ENCODE measurements at regions of chr1 and their contacts with region 1.

Region 1: GRCh38 chr1:30779294-30780071 is 21.9 kb upstream of the LAPTM5 start:
- DNase-seq: peak; percentile 38 to 87
- H3K4me3 ChIP-seq: no peak overlapping the region
- H3K27ac ChIP-seq: no peak overlapping the region
- H3K4me1 ChIP-seq: peaks cover 10% of the 10 kb centered on the region; the same call in 1 of the 2 replicates
- H3K27me3 ChIP-seq: no peaks in the 10 kb centered on the region
- CTCF ChIP-seq: peak; percentile 96

Region 2: GRCh38 chr1:28822788-28823187 is 1956.7 kb before region 1 on chr1:
- CTCF ChIA-PET with region 1: interaction called, 12 read pairs
- POLR2A ChIA-PET with region 1: no interaction called
- intact Hi-C with region 1: no loop called
- DNase-seq: no peak
- H3K4me3 ChIP-seq: no peak overlapping the region
- H3K27ac ChIP-seq: no peak overlapping the region
- H3K4me1 ChIP-seq: no peaks in the 10 kb centered on the region
- H3K27me3 ChIP-seq: no peaks in the 10 kb centered on the region
- CTCF ChIP-seq: no peak

Region 3: GRCh38 chr1:30727824-30728223 is 51.7 kb before region 1 on chr1:
- CTCF ChIA-PET with region 1: interaction called, 13 read pairs
- POLR2A ChIA-PET with region 1: no interaction called
- intact Hi-C with region 1: no loop called
- DNase-seq: no peak
- H3K4me3 ChIP-seq: no peak overlapping the region
- H3K27ac ChIP-seq: no peak overlapping the region
- H3K4me1 ChIP-seq: 0 out of 2 replicates have a peak, but pooled peaks cover 6% of the 10 kb centered on the region
- H3K27me3 ChIP-seq: no peaks in the 10 kb centered on the region
- CTCF ChIP-seq: no peak

Region 4: GRCh38 chr1:30929135-30929889 is 149.8 kb after region 1 on chr1:
- CTCF ChIA-PET with region 1: interaction called, 10 read pairs
- POLR2A ChIA-PET with region 1: interaction called, 3 read pairs
- intact Hi-C with region 1: loop called (anchors 5 kb)
- DNase-seq: peak in 1 of 2 experiments; percentile 37
- H3K4me3 ChIP-seq: no peak overlapping the region
- H3K27ac ChIP-seq: no peak overlapping the region
- H3K4me1 ChIP-seq: no peaks in the 10 kb centered on the region
- H3K27me3 ChIP-seq: no peaks in the 10 kb centered on the region
- CTCF ChIP-seq: peak; percentile 82

Region 5: DNA sequence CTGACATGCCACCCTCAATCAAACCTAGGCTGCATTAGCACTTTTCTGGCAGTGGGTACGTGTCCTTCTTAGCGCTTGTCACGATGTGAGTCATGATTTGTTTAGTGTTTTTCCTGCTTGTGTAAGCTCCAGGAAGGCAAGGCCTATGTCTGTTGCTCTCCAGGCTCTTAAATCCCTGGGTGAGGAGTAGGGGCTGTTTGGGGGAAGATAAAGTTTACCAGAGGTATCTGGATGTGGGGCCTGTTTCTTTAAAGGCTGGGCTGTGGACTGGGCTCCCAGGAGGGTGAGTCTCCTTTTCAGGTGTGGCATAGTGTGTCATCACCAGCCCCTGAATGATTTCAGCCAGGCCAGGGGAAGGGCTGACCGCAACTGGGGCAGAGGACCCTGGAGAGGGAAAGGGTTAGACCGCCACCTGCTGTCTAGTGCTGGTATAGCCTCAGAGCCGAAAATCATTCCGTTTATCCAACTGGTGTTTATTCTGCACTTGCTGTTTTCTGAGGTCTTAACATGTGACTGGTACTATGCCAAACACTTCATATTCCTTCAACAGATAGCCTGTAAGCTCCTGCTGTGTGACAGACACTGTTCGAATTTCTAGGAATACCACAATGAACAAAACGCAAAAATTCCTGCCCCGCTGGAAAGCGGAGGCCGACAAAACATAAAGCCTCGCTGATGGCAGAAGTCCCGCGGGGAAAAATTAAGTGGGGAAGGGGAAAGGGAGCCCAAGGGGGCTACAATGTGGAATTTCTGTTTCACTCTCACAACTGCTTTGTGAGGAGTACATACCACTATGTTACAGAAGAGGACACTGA is 643.2 kb after region 1 on chr1:
- CTCF ChIA-PET with region 1: no interaction called
- POLR2A ChIA-PET with region 1: no interaction called
- intact Hi-C with region 1: loop called (anchors 5 kb)
- DNase-seq: peak; percentile 81 to 82
- H3K4me3 ChIP-seq: no peak overlapping the region
- H3K27ac ChIP-seq: peak overlapping the region; percentile 82
- H3K4me1 ChIP-seq: peaks cover 27% of the 10 kb centered on the region
- H3K27me3 ChIP-seq: no peaks in the 10 kb centered on the region
- CTCF ChIP-seq: peak; percentile 86

Region 6: DNA sequence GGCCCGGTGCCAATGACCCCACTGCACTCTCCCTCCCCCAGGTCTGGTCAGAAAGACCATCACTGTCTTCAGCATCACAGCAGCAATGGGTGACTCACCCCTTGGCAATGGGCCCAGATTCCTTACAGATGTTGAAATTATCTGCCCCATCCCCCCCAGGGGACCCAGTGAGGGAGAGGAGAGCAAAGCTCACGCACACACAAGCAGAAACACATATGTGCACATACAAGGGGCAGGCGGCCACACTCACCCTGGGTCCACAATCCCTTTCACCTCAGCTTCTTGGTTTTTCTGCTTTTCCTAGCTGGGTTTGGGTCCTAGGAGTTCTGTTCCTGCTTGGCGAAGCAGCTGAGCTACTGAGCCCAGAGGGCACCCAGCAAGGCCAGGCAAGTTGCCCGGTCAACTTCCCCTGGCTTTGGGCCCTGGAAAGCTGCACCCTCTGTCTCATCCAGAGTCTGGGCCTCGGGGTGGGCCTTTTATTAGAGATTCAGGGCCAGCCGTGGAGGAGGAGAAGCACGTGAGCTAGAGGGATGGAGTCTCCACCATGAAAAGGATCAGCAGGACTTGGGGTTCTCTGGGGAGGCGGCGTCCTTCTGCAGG is 921.8 kb after region 1 on chr1:
- CTCF ChIA-PET with region 1: no interaction called
- POLR2A ChIA-PET with region 1: no interaction called
- intact Hi-C with region 1: no loop called
- DNase-seq: peak; percentile 87 to 91
- H3K4me3 ChIP-seq: no peak overlapping the region
- H3K27ac ChIP-seq: peak overlapping the region; percentile 25
- H3K4me1 ChIP-seq: peaks cover 50% of the 10 kb centered on the region
- H3K27me3 ChIP-seq: no peaks in the 10 kb centered on the region
- CTCF ChIP-seq: no peak